ENCODE measurements at regions of chr9 and their contacts with region 1.

Region 1: DNA sequence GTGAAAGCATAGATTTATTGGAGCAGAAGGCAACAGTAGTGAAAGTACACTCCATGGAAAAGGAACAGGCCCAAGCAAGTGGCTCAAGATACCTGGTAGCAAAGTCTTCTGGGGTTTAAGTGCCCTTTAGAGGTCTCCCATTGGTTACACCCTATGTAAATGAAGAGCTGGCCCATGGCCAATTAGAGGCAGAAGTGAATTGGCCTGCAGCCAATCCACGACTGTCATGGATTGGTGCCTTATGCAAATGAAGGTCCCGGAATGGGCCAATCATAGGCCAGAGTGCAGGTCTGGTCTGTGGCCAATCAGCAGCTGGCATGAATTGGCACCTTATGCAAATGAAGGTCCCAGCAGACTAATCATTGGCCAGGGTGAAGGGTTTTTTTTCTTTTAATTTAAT is 64.2 kb upstream of the PCSK5 start:
- DNase-seq: no peak
- ATAC-seq: no peak
- H3K4me3 ChIP-seq: no peak overlapping the region
- H3K27ac ChIP-seq: peak overlapping the region; percentile 64 to 68
- H3K4me1 ChIP-seq: peaks cover 10 to 11% of the 10 kb centered on the region in 2 donors
- H3K27me3 ChIP-seq: no peaks in the 10 kb centered on the region

Region 2: GRCh38 chr9:75539523-75539922 is 286.8 kb before region 1 on chr9:
- intact Hi-C with region 1: loop called in 1 of 2 experiments (anchors 10 kb)
- DNase-seq: no peak
- ATAC-seq: peak; percentile 78
- H3K4me3 ChIP-seq: no peak overlapping the region
- H3K27ac ChIP-seq: no peak overlapping the region
- H3K4me1 ChIP-seq: no peaks in the 10 kb centered on the region
- H3K27me3 ChIP-seq: no peaks in the 10 kb centered on the region

Region 3: GRCh38 chr9:75644649-75645048 is 181.7 kb before region 1 on chr9:
- intact Hi-C with region 1: loop called in 1 of 2 experiments (anchors 10 kb)
- DNase-seq: no peak
- ATAC-seq: peak; percentile 13
- H3K4me3 ChIP-seq: no peak overlapping the region
- H3K27ac ChIP-seq: peak overlapping the region in 1 of 2 donors; percentile 17
- H3K4me1 ChIP-seq: peaks cover 0 to 4% of the 10 kb centered on the region in 2 donors
- H3K27me3 ChIP-seq: no peaks in the 10 kb centered on the region

Region 4: DNA sequence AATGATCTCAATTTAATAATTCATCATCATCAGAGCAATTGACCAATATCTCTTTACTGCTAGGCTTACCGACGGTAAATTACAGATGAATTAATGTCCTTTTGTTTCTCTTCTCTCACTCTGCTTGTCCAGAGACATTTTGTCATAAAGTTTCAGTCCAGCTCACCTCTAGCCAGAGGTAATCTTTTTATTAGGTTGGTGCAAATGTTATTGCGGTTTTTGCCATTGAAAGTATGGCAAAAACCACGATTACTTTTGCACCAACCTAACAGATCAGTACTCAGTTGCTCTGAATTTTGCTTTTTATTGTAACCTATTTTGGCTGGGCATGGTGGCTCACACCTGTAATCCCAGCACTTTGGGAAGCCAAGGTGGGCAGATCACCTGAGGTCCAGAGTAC is 102.8 kb before region 1 on chr9:
- intact Hi-C with region 1: loop called (anchors 5 to 10 kb)
- DNase-seq: no peak
- ATAC-seq: no peak
- H3K4me3 ChIP-seq: no peak overlapping the region
- H3K27ac ChIP-seq: no peak overlapping the region
- H3K4me1 ChIP-seq: peaks cover 2 to 7% of the 10 kb centered on the region in 2 donors
- H3K27me3 ChIP-seq: no peaks in the 10 kb centered on the region